Astrocyte of the cerebellum (primary cell): ENCODE measurements at regions of chr3 and their contacts with region 1.

Region 1: DNA sequence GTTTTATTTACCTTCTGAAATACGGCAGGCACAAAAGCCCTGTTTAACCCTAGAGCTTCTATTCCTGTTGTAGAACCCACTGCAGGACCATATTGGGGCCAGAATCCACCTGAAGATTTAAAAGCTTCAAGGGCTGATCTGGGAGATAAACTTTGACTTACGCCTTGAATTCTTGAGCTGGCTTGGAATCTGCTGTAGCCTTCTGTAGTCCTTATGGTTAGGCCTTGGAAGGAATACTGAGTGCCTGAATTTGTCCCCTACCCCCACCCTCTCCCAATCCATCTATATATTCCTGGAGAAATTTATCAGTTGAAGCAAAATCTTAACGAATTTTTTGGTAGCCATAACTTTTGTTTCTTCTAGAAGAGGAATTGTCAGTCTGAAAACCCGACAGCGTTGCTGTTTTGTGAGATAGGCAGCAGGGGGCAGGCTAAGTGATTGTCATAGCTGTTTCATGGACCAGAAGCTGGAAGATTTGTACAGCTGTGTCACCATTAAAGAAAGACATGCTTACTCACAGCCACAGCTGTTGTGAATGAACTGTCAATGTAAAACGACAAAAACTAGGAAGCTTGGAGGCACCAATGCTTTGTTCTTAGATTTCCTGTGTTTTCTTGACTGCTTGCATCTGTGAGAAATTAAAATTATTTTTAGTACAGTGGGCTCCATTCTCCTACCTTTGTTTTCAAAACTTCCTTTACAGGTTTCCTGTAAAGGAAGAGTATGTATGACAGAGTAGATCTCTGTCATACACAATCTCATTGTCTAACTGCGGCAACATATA is 12.8 kb downstream of the LXN start:
- DNase-seq: peak; percentile 56
- H3K4me3 ChIP-seq: no peak overlapping the region
- CTCF ChIP-seq: peak; percentile 76

Region 2: GRCh38 chr3:158602227-158602626 is 57.4 kb before region 1 on chr3:
- in situ Hi-C with region 1: no loop called
- DNase-seq: no peak
- H3K4me3 ChIP-seq: no peak overlapping the region
- CTCF ChIP-seq: no peak

Region 3: GRCh38 chr3:158709666-158710083 is 50.0 kb after region 1 on chr3:
- in situ Hi-C with region 1: loop called (anchors 10 kb)
- DNase-seq: peak; percentile 99
- H3K4me3 ChIP-seq: no peak overlapping the region
- CTCF ChIP-seq: no peak

Region 4: DNA sequence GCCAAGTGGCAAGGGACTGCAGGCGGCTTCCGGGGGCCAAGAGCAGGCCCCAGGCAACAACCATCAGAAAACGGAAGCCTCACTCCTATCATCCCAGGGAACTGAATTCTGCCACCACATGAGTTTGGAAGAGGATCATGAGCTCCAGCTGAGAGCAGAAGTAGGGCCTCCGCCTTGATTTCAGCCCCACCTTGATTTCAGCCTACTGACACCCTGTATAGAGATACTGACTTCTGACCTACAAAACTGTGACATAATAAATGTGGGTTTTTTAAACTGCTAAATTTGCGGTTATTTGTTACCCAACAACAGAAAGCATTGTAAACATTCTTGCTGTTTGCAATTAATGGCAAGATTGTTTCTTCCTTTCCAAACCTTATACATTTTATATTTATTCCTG is 94.2 kb after region 1 on chr3:
- in situ Hi-C with region 1: no loop called
- DNase-seq: no peak
- H3K4me3 ChIP-seq: no peak overlapping the region
- CTCF ChIP-seq: no peak